CD8-positive, alpha-beta memory T cell (primary cell): ENCODE measurements at regions of chr10 and their contacts with region 1.

Region 1: DNA sequence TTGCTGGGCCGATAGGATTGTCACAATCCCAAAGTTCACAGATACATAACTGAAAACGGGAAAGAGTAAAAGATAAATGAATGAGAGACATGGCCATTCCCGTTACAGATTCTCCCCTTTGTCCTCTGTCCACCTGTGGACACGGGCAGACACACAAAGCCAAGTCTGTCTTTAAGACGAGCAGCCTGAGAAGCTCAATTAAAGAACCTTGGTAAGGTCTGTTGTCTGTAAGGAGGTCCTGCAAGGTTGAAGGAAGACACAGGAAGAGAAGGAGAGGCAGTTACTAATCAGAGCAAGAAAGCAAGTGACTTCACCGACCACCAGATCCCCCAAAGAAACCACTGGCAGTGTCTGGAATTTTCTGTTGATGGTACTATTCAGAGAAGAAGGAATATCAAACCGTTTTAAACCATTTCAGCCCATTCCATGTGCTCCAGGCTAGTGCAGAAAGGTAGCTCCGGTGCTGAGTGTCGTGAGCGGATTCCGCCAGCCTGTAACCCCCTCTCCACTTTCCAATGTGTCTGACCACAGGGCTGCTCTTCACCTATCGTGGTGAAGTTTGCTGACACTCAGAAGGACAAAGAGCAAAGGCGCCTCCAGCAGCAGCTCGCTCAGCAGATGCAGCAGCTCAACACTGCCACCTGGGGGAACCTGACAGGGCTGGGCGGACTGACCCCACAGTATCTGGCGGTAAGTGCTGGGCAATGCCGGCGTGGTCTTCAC is 252.6 kb downstream of the CELF2 start:
- DNase-seq: peak; percentile 50 to 78 (median 65)
- H3K4me3 ChIP-seq: no peak overlapping the region
- H3K4me3 Mint-ChIP-seq: peak overlapping the region; percentile 24 to 80 (median 38)
- H3K27ac ChIP-seq: peak overlapping the region; percentile 1
- H3K27ac Mint-ChIP-seq: peak overlapping the region; percentile 2 to 98 (median 84)
- H3K4me1 ChIP-seq: peaks cover 26% of the 10 kb centered on the region
- H3K4me1 Mint-ChIP-seq: peaks cover 70 to 93% (median 85%) of the 10 kb centered on the region in 3 donors
- H3K27me3 ChIP-seq: no peaks in the 10 kb centered on the region
- H3K27me3 Mint-ChIP-seq: peaks cover 0 to 3% of the 10 kb centered on the region in 2 donors

Region 2: GRCh38 chr10:10833955-10834354 is 436.3 kb before region 1 on chr10:
- CTCF ChIA-PET with region 1: no interaction called
- POLR2A ChIA-PET with region 1: no interaction called
- DNase-seq: no peak
- H3K4me3 ChIP-seq: no peak overlapping the region
- H3K4me3 Mint-ChIP-seq: no peak overlapping the region
- H3K27ac ChIP-seq: no peak overlapping the region
- H3K27ac Mint-ChIP-seq: no peak overlapping the region
- H3K4me1 ChIP-seq: no peaks in the 10 kb centered on the region
- H3K4me1 Mint-ChIP-seq: no peaks in the 10 kb centered on the region
- H3K27me3 ChIP-seq: no peaks in the 10 kb centered on the region
- H3K27me3 Mint-ChIP-seq: peaks cover 2 to 9% of the 10 kb centered on the region in 2 donors

Region 3: DNA sequence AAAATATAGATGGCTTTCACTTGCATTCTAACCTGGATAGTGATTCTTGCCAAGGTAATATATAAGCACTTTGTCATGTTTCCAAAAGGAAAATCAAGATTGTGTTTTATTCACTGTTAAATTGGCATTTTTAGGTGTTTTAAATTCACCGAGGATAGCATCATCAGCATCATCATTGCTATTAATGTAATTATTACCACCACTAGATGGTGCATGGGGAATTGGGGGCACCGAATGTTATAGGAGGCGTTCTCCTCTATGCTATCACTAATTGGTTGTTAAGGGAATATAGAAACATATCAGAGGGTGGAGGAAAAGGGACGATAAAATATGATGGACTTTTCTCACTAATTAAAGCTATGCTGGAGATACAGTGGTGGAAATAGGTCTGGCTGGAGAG is 157.1 kb before region 1 on chr10:
- CTCF ChIA-PET with region 1: interaction called, 27 read pairs
- POLR2A ChIA-PET with region 1: no interaction called
- DNase-seq: peak in 3 of 5 donors; percentile 52 to 56 (median 55)
- H3K4me3 ChIP-seq: no peak overlapping the region
- H3K4me3 Mint-ChIP-seq: peak overlapping the region in 4 of 7 donors; percentile 10 to 66 (median 24)
- H3K27ac ChIP-seq: no peak overlapping the region
- H3K27ac Mint-ChIP-seq: peak overlapping the region in 7 of 8 donors; percentile 49 to 96 (median 74)
- H3K4me1 ChIP-seq: peaks cover 9% of the 10 kb centered on the region
- H3K4me1 Mint-ChIP-seq: peaks cover 11 to 27% (median 14%) of the 10 kb centered on the region in 3 donors
- H3K27me3 ChIP-seq: no peaks in the 10 kb centered on the region
- H3K27me3 Mint-ChIP-seq: no peaks in the 10 kb centered on the region

Region 4: GRCh38 chr10:11157292-11158076 is 112.8 kb before region 1 on chr10:
- CTCF ChIA-PET with region 1: no interaction called
- POLR2A ChIA-PET with region 1: no interaction called
- DNase-seq: peak in 1 of 5 donors; percentile 65
- H3K4me3 ChIP-seq: no peak overlapping the region
- H3K4me3 Mint-ChIP-seq: peak overlapping the region in 4 of 7 donors; percentile 2 to 80 (median 22)
- H3K27ac ChIP-seq: no peak overlapping the region
- H3K27ac Mint-ChIP-seq: peak overlapping the region; percentile 39 to 98 (median 92)
- H3K4me1 ChIP-seq: peaks cover 98% of the 10 kb centered on the region
- H3K4me1 Mint-ChIP-seq: peaks cover 84 to 97% (median 96%) of the 10 kb centered on the region in 3 donors
- H3K27me3 ChIP-seq: no peaks in the 10 kb centered on the region
- H3K27me3 Mint-ChIP-seq: no peaks in the 10 kb centered on the region

Region 5: DNA sequence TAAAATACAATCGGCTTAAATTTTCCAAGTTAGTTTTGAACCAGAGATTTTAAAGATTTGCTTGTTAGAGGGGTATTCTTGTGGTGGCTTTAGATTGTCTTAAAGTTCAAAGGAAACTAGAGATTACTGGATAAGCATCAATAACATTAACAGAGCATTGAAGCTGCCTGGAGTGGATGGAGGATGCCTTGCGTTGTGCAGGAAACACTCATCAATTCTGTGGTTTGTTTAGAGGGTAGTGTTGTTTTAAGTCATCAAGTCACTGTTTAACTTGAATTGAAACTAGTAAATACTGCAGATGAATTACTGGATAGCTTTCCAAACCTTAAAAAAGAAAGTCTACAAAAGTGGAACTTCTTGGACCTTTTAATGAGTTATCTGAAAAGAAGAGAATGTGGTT is 34.1 kb before region 1 on chr10:
- CTCF ChIA-PET with region 1: no interaction called
- POLR2A ChIA-PET with region 1: no interaction called
- DNase-seq: peak in 2 of 5 donors; percentile 35 to 47
- H3K4me3 ChIP-seq: peak overlapping the region; percentile 3
- H3K4me3 Mint-ChIP-seq: peak overlapping the region; percentile 33 to 82 (median 72)
- H3K27ac ChIP-seq: no peak overlapping the region
- H3K27ac Mint-ChIP-seq: peak overlapping the region; percentile 71 to 98 (median 93)
- H3K4me1 ChIP-seq: peaks cover 92% of the 10 kb centered on the region
- H3K4me1 Mint-ChIP-seq: peaks cover 72 to 99% (median 89%) of the 10 kb centered on the region in 3 donors
- H3K27me3 ChIP-seq: no peaks in the 10 kb centered on the region
- H3K27me3 Mint-ChIP-seq: no peaks in the 10 kb centered on the region

Region 6: DNA sequence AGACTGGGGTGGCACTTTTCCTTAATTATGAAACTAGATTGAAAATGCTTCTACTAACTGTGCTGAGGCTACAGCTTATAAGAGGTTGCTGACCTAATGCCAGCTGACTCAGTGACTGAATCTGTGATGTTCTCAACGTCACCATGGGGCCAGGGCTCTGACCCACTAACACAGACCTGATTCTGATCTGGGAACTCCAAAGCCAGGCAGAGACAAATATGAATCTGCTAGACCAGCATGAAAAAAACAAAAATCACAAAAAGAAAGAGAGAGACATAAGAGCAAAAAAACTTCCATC is 325.0 kb after region 1 on chr10:
- CTCF ChIA-PET with region 1: no interaction called
- POLR2A ChIA-PET with region 1: no interaction called
- DNase-seq: no peak
- H3K4me3 ChIP-seq: no peak overlapping the region
- H3K4me3 Mint-ChIP-seq: no peak overlapping the region
- H3K27ac ChIP-seq: no peak overlapping the region
- H3K27ac Mint-ChIP-seq: no peak overlapping the region
- H3K4me1 ChIP-seq: no peaks in the 10 kb centered on the region
- H3K4me1 Mint-ChIP-seq: no peaks in the 10 kb centered on the region
- H3K27me3 ChIP-seq: no peaks in the 10 kb centered on the region
- H3K27me3 Mint-ChIP-seq: peaks cover 5 to 9% of the 10 kb centered on the region in 2 donors